Caco-2 (cell line): ENCODE measurements at regions of chr2 and their contacts with region 1.

Region 1: DNA sequence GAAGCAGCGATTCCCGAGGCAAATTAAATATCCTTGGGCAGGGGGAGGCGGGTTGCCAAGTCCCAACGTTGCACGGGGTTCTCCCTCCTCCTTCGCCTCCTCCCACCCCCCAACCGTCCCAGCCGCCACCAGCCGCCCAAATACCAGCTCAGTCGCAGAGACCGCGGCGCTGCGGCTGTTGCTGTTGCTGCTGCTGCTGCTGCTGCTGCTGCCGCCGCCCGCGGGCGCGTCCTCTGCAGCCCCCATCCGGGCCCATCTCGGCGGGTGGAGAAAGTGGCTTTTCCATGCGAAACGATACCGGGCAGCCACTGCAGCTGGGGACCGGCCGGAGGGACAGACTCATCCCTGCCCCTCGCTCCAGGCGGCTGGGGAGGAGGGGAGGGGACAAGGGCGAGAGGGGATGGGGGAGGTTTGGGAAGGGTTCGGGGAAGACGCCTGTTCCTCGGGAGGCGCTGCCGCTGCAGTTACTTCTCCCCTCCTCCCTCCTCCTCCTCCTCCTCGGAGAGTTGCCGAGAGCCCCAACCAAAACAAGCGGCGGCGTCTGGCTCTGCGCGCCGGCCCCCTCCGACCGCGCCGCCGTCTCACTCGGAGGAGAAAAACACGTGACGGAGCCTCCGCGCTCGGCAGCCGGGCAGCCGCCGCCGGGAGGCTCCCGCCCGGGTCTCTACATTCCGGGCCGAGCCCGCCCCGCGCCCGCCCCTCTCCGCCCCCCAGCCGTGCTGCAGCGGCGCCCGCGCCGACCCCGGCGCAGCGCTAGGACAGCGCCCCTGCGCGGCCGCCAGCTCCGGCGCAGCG is at the start of gene IRS1:
- DNase-seq: peak; percentile 73
- H3K4me3 ChIP-seq: peak within 1 kb of the TSS; percentile 81
- H3K4me3 Mint-ChIP-seq: peak within 1 kb of the TSS; percentile 85
- H3K27ac Mint-ChIP-seq: peak within 1 kb of the TSS; percentile 71
- H3K4me1 ChIP-seq: peaks cover 28% of the 10 kb centered on the region
- H3K4me1 Mint-ChIP-seq: peaks cover 9% of the 10 kb centered on the region
- H3K27me3 ChIP-seq: no peaks in the 10 kb centered on the region
- H3K27me3 Mint-ChIP-seq: no peaks in the 10 kb centered on the region
- CTCF ChIP-seq: peak in 1 of 2 experiments; percentile 17
- total RNA-seq, gene IRS1: 27.9 and 32.4 TPM in 2 replicates

Region 2: GRCh38 chr2:225889446-225889850 is 909.9 kb before region 1 on chr2:
- CTCF ChIA-PET with region 1: interaction called, 5 read pairs
- POLR2A ChIA-PET with region 1: no interaction called
- intact Hi-C with region 1: loop called (anchors 1 kb)
- DNase-seq: peak in 1 of 2 experiments; percentile 40
- H3K4me3 ChIP-seq: no peak overlapping the region
- H3K4me3 Mint-ChIP-seq: no peak overlapping the region
- H3K27ac Mint-ChIP-seq: no peak overlapping the region
- H3K4me1 ChIP-seq: no peaks in the 10 kb centered on the region
- H3K4me1 Mint-ChIP-seq: no peaks in the 10 kb centered on the region
- H3K27me3 ChIP-seq: no peaks in the 10 kb centered on the region
- H3K27me3 Mint-ChIP-seq: no peaks in the 10 kb centered on the region
- CTCF ChIP-seq: peak; percentile 48 to 63

Region 3: GRCh38 chr2:226215902-226216503 is 583.4 kb before region 1 on chr2:
- CTCF ChIA-PET with region 1: interaction called, 4 read pairs
- POLR2A ChIA-PET with region 1: no interaction called
- intact Hi-C with region 1: loop called (anchors 1 kb)
- DNase-seq: peak; percentile 38 to 42
- H3K4me3 ChIP-seq: no peak overlapping the region
- H3K4me3 Mint-ChIP-seq: no peak overlapping the region
- H3K27ac Mint-ChIP-seq: no peak overlapping the region
- H3K4me1 ChIP-seq: no peaks in the 10 kb centered on the region
- H3K4me1 Mint-ChIP-seq: no peaks in the 10 kb centered on the region
- H3K27me3 ChIP-seq: no peaks in the 10 kb centered on the region
- H3K27me3 Mint-ChIP-seq: no peaks in the 10 kb centered on the region
- CTCF ChIP-seq: peak; percentile 33 to 39

Region 4: GRCh38 chr2:226733189-226733858 is 66.1 kb before region 1 on chr2:
- CTCF ChIA-PET with region 1: interaction called, 3 read pairs
- POLR2A ChIA-PET with region 1: interaction called, 3 read pairs
- intact Hi-C with region 1: loop called (anchors 2 kb)
- DNase-seq: peak in 1 of 2 experiments; percentile 25
- H3K4me3 ChIP-seq: no peak overlapping the region
- H3K4me3 Mint-ChIP-seq: no peak overlapping the region
- H3K27ac Mint-ChIP-seq: no peak overlapping the region
- H3K4me1 ChIP-seq: peaks cover 36% of the 10 kb centered on the region
- H3K4me1 Mint-ChIP-seq: peaks cover 13% of the 10 kb centered on the region
- H3K27me3 ChIP-seq: no peaks in the 10 kb centered on the region
- H3K27me3 Mint-ChIP-seq: no peaks in the 10 kb centered on the region
- CTCF ChIP-seq: no peak

Region 5: GRCh38 chr2:226845386-226846116 is 46.2 kb after region 1 on chr2:
- CTCF ChIA-PET with region 1: no interaction called
- POLR2A ChIA-PET with region 1: no interaction called
- intact Hi-C with region 1: loop called (anchors 1 kb)
- DNase-seq: no peak
- H3K4me3 ChIP-seq: no peak overlapping the region
- H3K4me3 Mint-ChIP-seq: no peak overlapping the region
- H3K27ac Mint-ChIP-seq: no peak overlapping the region
- H3K4me1 ChIP-seq: no peaks in the 10 kb centered on the region
- H3K4me1 Mint-ChIP-seq: no peaks in the 10 kb centered on the region
- H3K27me3 ChIP-seq: no peaks in the 10 kb centered on the region
- H3K27me3 Mint-ChIP-seq: no peaks in the 10 kb centered on the region
- CTCF ChIP-seq: no peak